Heart left ventricle (tissue), 16 donors: ENCODE measurements at regions of chr15 and their contacts with region 1.

Region 1: DNA sequence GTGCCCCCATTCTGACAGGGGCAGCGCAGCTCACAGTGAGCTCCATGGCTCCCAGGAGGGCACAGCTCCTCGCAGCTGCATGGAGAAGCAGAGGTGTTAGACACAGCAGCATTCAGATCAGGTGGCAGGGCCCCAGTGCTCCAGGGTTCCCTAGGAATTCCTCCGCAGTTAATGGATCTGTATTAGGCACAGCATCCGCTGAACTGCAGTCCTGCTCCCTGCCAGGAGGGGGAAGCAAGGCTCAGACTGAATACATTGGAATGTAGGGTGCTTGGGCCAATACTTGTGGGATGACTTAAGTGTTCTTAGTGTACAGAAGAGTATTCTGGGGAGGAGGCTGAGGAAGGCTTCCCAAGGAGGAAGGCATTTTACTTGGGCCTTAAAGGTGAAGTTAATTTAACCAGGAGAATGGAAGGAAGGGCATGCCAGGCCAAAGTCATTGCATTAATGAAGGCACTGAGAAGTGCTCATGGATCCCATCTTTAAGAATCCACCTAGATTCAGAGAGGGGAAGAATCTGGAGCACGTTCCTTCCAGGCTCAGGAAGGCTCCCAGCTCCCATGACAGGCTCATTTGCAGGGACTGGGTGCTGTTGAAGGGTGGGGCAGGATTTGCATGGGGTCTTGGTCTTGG is 111.6 kb downstream of the RAB11A start:
- DNase-seq: peak in 4 of 5 donors; percentile 28 to 43 (median 39)
- ATAC-seq: peak in 3 of 4 donors; percentile 68 to 83 (median 71)
- H3K4me3 ChIP-seq: no peak overlapping the region
- H3K27ac ChIP-seq: no peak overlapping the region
- H3K4me1 ChIP-seq: peaks cover 0 to 8% (median 1%) of the 10 kb centered on the region in 12 donors
- H3K27me3 ChIP-seq: peaks cover 7 to 62% (median 33%) of the 10 kb centered on the region in 9 donors
- CTCF ChIP-seq: peak; percentile 39 to 70 (median 58)
- POLR2A ChIP-seq: no peak

Region 2: DNA sequence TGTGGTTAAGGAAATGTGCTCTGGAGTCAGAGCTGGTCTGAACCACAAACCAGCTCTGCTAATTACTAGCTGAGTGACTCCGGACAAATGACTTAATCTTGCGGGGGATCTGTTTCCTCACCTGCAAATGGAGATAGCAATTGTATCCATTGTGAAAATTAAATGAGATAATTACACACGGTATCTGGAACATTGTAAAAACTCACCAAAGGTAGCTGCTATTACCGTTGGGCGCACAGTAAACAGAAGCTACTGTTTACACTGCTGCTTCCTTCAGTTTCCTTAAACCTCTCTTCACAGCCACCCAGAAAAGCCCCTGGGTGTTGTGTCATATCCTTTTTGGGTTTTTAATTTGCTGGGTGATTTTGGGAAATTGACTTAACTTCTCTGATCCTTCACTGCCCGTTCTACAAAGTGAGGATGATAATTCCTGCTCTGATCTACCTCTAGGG is 164.8 kb after region 1 on chr15:
- intact Hi-C with region 1: loop called in 2 of 10 experiments (anchors 10 kb)
- DNase-seq: no peak
- ATAC-seq: no peak
- H3K4me3 ChIP-seq: no peak overlapping the region
- H3K27ac ChIP-seq: no peak overlapping the region
- H3K4me1 ChIP-seq: no peaks in the 10 kb centered on the region
- H3K27me3 ChIP-seq: peaks cover 0 to 13% (median 0%) of the 10 kb centered on the region in 9 donors
- CTCF ChIP-seq: no peak
- POLR2A ChIP-seq: no peak

Region 3: GRCh38 chr15:66153549-66154415 is 172.8 kb after region 1 on chr15:
- intact Hi-C with region 1: loop called in 2 of 10 experiments (anchors 10 kb)
- DNase-seq: no peak
- ATAC-seq: no peak
- H3K4me3 ChIP-seq: no peak overlapping the region
- H3K27ac ChIP-seq: no peak overlapping the region
- H3K4me1 ChIP-seq: peaks cover 0 to 4% (median 0%) of the 10 kb centered on the region in 12 donors
- H3K27me3 ChIP-seq: peaks cover 0 to 24% (median 6%) of the 10 kb centered on the region in 9 donors
- CTCF ChIP-seq: no peak
- POLR2A ChIP-seq: no peak

Region 4: DNA sequence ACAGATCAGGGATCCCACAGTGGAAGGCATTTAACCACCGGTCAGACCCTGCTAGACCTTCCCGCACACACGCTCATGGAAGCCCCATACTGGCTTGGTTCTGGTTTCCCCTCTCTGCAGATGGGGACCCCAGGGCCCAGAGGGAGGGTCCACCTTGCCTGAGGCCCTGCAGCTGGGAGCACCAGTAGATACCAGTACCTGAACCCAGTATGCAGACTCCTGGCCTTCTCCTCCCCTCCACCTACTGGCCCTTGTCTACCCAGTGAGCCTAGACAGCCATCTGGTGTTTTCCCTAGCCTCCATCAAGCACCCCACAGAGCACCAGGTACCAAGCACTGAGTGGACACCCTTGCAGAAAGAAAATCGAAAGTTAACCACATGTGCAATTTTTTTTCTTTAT is 207.5 kb after region 1 on chr15:
- intact Hi-C with region 1: loop called in 3 of 10 experiments (anchors 5 to 10 kb)
- DNase-seq: no peak
- ATAC-seq: peak in 1 of 4 donors; percentile 44
- H3K4me3 ChIP-seq: no peak overlapping the region
- H3K27ac ChIP-seq: no peak overlapping the region
- H3K4me1 ChIP-seq: no peaks in the 10 kb centered on the region
- H3K27me3 ChIP-seq: peaks cover 0 to 42% (median 9%) of the 10 kb centered on the region in 9 donors
- CTCF ChIP-seq: peak in 2 of 12 donors; percentile 3 to 20
- POLR2A ChIP-seq: no peak

Region 5: GRCh38 chr15:66287461-66288057 is 306.6 kb after region 1 on chr15:
- intact Hi-C with region 1: loop called in 4 of 10 experiments (anchors 5 kb)
- DNase-seq: no peak
- ATAC-seq: no peak
- H3K4me3 ChIP-seq: no peak overlapping the region
- H3K27ac ChIP-seq: no peak overlapping the region
- H3K4me1 ChIP-seq: peaks cover 0 to 11% (median 5%) of the 10 kb centered on the region in 12 donors
- H3K27me3 ChIP-seq: no peaks in the 10 kb centered on the region
- CTCF ChIP-seq: peak; percentile 35 to 76 (median 62)
- POLR2A ChIP-seq: no peak